CD14-positive monocyte (primary cell): ENCODE measurements at regions of chr6 and their contacts with region 1.

Region 1: GRCh38 chr6:132548746-132549463 is 3.6 kb upstream of the TAAR8 start:
- DNase-seq: no peak
- H3K4me3 ChIP-seq: no peak overlapping the region
- H3K4me3 Mint-ChIP-seq: no peak overlapping the region
- H3K27ac ChIP-seq: no peak overlapping the region
- H3K27ac Mint-ChIP-seq: no peak overlapping the region
- H3K4me1 ChIP-seq: no peaks in the 10 kb centered on the region
- H3K4me1 Mint-ChIP-seq: no peaks in the 10 kb centered on the region
- H3K27me3 ChIP-seq: no peaks in the 10 kb centered on the region
- H3K27me3 Mint-ChIP-seq: peaks cover 2 to 6% (median 5%) of the 10 kb centered on the region in 3 donors
- CTCF ChIP-seq: no peak

Region 2: DNA sequence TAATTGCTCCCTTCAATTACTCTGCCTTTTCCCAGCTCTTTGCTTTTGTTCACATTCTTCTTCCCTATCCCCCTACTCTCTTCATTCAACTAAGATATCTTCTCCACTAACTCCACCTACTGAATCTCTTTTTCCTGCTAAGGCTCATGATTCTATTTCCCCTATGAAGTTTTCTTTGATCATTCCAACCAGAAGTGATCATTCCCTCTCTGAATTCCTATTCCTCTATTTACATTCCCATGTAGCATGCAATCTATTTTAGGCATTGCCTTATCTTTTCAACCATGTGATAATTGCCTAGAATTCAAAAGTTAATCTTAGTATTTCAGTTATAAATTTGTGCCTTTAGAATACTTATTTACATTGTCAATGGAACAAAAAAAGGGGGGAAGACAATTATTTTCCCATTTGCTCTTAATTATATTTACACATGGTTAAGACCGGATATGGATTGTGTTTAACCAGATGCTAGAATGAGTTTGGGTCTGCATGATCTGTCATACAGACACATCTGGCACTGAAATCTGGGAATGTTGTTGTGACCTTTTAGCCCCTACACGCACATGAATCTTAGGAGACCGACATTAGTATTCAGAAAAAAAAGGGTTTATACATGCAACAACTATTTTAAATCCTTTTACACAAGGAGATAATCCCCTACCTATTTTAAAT is 168.4 kb before region 1 on chr6:
- intact Hi-C with region 1: no loop called
- DNase-seq: no peak
- H3K4me3 ChIP-seq: no peak overlapping the region
- H3K4me3 Mint-ChIP-seq: no peak overlapping the region
- H3K27ac ChIP-seq: no peak overlapping the region
- H3K27ac Mint-ChIP-seq: peak overlapping the region in 1 of 7 donors; percentile 13
- H3K4me1 ChIP-seq: peaks cover 0 to 10% of the 10 kb centered on the region in 2 donors
- H3K4me1 Mint-ChIP-seq: peaks cover 11% of the 10 kb centered on the region
- H3K27me3 ChIP-seq: no peaks in the 10 kb centered on the region
- H3K27me3 Mint-ChIP-seq: peaks cover 0 to 3% (median 2%) of the 10 kb centered on the region in 3 donors
- CTCF ChIP-seq: no peak

Region 3: DNA sequence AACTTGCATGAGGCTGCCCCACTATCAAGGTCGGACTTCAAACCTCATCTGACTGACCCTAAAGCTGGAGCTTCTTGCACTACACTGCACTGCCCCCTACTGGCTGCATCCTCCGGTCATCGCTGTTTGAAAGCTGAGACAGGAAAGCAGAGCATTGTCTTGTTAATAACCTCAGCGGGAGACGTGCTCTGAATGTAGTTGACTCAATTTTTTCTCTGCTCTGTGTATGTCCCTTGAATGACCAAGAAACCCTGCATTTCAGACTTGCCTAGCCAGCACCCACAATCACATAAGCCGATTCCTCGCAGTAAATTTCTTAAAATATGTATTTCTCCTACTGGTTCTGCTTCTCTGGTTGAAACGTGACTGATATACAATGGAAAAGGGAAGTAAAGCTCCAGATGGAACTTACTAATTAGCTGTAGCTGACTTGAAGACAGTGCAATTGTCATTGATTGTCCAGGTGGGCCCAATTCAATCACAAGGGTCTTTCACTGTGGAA is 1367.8 kb after region 1 on chr6:
- intact Hi-C with region 1: loop called in 1 of 2 experiments (anchors 10 kb)
- DNase-seq: peak; percentile 50 to 66 (median 58)
- H3K4me3 ChIP-seq: peak overlapping the region in 1 of 3 experiments; percentile 39
- H3K4me3 Mint-ChIP-seq: peak overlapping the region in 1 of 2 donors; percentile 82
- H3K27ac ChIP-seq: no peak overlapping the region
- H3K27ac Mint-ChIP-seq: peak overlapping the region in 1 of 7 donors; percentile 36
- H3K4me1 ChIP-seq: peaks cover 0 to 3% of the 10 kb centered on the region in 2 donors
- H3K4me1 Mint-ChIP-seq: peaks cover 10% of the 10 kb centered on the region
- H3K27me3 ChIP-seq: peaks cover 22 to 24% of the 10 kb centered on the region in 2 donors
- H3K27me3 Mint-ChIP-seq: peaks cover 9 to 29% (median 23%) of the 10 kb centered on the region in 3 donors
- CTCF ChIP-seq: peak; percentile 94